ENCODE measurements at regions of chr7 and their contacts with region 1.

Region 1: DNA sequence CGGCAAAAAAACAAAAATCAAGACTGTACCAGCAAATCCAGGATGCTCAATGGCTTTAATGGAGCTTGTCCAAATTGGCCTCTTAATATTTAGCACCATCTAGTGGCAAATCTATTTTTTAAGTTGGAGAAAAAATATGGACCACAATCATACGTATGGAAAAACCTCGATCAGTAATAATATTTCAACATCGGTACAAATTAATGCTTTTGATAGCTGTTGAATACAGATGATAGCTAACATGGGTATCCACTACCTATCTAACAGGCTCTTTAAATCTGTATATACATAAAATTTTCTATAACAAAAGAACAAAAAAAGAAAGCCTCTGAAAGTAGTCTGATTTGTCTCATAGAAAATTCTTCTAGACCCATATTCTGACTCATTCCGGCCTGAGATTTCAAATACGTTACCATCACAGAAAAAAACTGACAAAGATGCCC is 29.2 kb downstream of the COA1 start:
- DNase-seq: no peak
- H3K4me3 ChIP-seq: no peak overlapping the region
- H3K27ac ChIP-seq: no peak overlapping the region
- H3K4me1 ChIP-seq: peaks cover 7% of the 10 kb centered on the region
- H3K27me3 ChIP-seq: no peaks in the 10 kb centered on the region
- CTCF ChIP-seq: peak; percentile 56 to 75 (median 71)
- POLR2A ChIP-seq: no peak

Region 2: DNA sequence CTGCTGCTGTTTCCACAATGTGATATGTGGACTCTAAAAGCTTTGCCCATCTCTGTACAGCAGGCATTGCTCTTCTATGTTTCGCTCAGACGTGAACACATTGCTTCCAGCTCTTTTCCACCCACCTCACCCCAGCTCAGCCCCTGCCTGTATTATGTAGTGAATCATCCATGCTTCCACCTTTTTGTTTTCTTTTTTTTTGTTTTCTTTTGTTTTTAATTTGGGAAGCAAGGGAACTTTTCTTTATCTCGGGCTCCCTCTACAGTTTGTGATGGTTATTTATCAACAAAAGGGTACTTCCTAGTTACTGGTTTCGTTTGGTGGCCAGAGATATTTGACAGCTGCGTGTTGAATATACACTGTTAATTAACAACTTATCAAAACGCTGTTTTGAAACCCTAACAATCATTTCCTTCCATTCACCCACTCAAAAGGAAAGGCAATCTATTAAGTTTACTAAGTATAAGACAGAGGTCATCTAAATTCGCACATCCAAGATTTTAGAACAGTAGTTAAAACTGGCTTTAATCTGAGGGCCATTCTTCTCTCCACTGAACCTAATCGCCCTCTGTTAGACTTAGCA is 245.1 kb before region 1 on chr7:
- intact Hi-C with region 1: loop called (anchors 5 kb)
- DNase-seq: no peak
- H3K4me3 ChIP-seq: no peak overlapping the region
- H3K27ac ChIP-seq: no peak overlapping the region
- H3K4me1 ChIP-seq: no peaks in the 10 kb centered on the region
- H3K27me3 ChIP-seq: no peaks in the 10 kb centered on the region
- CTCF ChIP-seq: no peak
- POLR2A ChIP-seq: no peak